ENCODE measurements at regions of chr15 and their contacts with region 1.

Region 1: DNA sequence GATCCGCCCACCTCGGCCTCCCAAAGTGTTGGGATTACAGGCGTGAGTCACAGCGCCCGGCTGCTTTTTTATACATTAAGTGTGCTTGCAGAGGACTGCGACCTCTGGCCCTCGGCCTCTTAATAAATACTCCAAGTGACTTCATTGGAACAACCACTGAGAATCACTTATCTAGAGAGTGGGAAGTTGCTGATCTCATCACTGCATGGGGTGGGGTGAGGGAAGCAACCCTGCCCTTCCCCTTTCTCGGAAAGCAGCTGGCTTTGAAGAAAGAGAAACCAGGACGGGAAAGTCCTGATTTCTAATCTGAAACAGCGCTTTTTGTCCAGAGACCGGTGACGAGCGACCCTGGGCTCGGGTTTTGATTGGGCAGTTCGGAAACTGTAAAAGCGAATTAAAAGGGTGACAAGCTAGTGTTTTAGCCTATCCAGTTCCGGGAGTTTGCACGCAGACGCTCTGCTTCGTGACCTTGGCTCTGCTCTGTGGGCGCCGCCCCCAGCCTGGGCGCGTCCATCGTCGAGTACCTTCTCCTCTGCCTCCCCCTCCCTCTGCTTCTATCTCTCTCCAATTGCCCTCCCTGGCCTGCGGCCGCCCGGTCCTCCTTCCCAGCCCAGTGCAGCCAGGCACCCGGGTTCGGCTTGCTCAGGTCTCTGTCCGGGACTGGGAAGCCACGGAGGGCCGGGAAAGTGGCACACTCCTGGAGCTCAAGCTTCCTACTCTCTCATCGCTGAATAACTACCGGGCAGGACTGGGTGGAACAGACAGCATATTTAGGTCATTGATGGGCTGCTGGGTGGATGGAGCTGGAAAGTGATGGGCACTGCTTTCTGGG is 7.5 kb upstream of the TRIM69 start:
- DNase-seq: peak; percentile 94 to 95
- H3K4me3 ChIP-seq: peak overlapping the region; percentile 68
- H3K4me3 Mint-ChIP-seq: peak overlapping the region; percentile 86
- H3K27ac Mint-ChIP-seq: peak overlapping the region; percentile 97
- H3K4me1 ChIP-seq: peaks cover 3% of the 10 kb centered on the region; the same call in 1 of the 2 replicates
- H3K4me1 Mint-ChIP-seq: no peaks in the 10 kb centered on the region
- H3K27me3 ChIP-seq: no peaks in the 10 kb centered on the region
- H3K27me3 Mint-ChIP-seq: no peaks in the 10 kb centered on the region
- CTCF ChIP-seq: no peak

Region 2: GRCh38 chr15:44711356-44712107 is 17.3 kb before region 1 on chr15 and contains the start of gene B2M:
- CTCF ChIA-PET with region 1: interaction called, 26 read pairs
- POLR2A ChIA-PET with region 1: interaction called, 32 read pairs
- intact Hi-C with region 1: loop called (anchors 1 kb)
- DNase-seq: peak; percentile 93 to 94
- H3K4me3 ChIP-seq: peak within 1 kb of the TSS; percentile 66
- H3K4me3 Mint-ChIP-seq: peak within 1 kb of the TSS; percentile 100
- H3K27ac Mint-ChIP-seq: peak within 1 kb of the TSS; percentile 99
- H3K4me1 ChIP-seq: peaks cover 14% of the 10 kb centered on the region
- H3K4me1 Mint-ChIP-seq: no peaks in the 10 kb centered on the region
- H3K27me3 ChIP-seq: no peaks in the 10 kb centered on the region
- H3K27me3 Mint-ChIP-seq: no peaks in the 10 kb centered on the region
- CTCF ChIP-seq: no peak
- total RNA-seq, gene B2M: 269 and 273 TPM in 2 replicates

Region 3: GRCh38 chr15:45112586-45113379 is 384.0 kb after region 1 on chr15:
- CTCF ChIA-PET with region 1: no interaction called
- POLR2A ChIA-PET with region 1: no interaction called
- intact Hi-C with region 1: no loop called
- DNase-seq: no peak
- H3K4me3 ChIP-seq: peak overlapping the region; percentile 31
- H3K4me3 Mint-ChIP-seq: peak overlapping the region; percentile 77
- H3K27ac Mint-ChIP-seq: no peak overlapping the region
- H3K4me1 ChIP-seq: peaks cover 2% of the 10 kb centered on the region; the same call in 1 of the 2 replicates
- H3K4me1 Mint-ChIP-seq: peaks cover 10% of the 10 kb centered on the region
- H3K27me3 ChIP-seq: no peaks in the 10 kb centered on the region
- H3K27me3 Mint-ChIP-seq: peaks cover 4% of the 10 kb centered on the region
- CTCF ChIP-seq: no peak

Measured in Caco-2 (cell line).